GM12878 (cell line): ENCODE measurements at regions of chr11 and their contacts with region 1.

Region 1: DNA sequence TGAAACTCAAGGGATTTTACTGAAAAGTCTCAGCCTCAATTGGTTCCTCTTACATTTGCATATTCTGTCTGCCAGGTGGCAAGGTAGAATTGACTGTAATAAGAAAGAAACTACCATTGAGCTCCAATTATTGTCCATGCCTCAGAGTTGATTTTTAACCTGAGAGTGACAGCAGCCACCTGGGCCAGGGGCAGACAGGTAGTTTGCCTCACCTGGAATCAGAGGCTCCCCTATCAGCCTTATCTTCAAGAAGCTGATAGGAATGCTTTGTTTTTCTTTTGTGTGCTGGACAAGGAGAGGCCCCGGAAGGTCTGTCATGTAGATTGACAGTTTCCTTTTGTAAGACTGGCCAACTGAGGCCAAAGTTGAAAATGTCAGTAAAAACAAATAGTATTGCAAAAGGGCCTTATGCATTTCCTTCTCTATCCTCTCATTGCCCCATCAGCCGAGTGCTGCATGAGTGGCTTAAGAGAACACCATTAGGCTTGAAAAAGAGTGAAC is 34.1 kb downstream of the CD44 start:
- DNase-seq: peak; percentile 35
- ATAC-seq: peak; percentile 74
- H3K4me3 ChIP-seq: no peak overlapping the region
- H3K27ac ChIP-seq: peak overlapping the region; percentile 38
- H3K4me1 ChIP-seq: peaks cover 32% of the 10 kb centered on the region
- H3K27me3 ChIP-seq: no peaks in the 10 kb centered on the region
- CTCF ChIP-seq: no peak
- EP300 ChIP-seq: peak in 1 of 2 experiments; percentile 37; a peak in 1 of 4 replicates
- POLR2A ChIP-seq: no peak
- RAD21 ChIP-seq: no peak

Region 2: DNA sequence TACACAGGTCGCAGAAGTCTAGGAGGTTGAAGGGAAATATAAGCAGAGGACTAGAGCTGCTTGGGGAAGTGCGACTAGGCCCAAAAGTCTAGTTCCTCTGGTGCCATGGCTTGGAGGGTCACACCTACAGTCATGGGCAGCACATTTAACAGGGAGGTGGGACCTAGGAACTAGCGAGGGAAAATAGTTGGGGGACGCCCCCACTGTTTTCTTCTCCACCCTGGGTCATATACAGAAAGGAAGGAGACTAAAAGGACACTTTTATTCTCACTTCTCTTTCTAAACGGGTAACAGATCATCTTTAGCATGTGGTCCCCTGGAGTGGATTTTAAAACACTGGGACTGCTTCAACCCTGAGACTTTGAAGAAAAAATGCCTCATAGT is 273.4 kb before region 1 on chr11:
- CTCF ChIA-PET with region 1: no interaction called
- POLR2A ChIA-PET with region 1: no interaction called
- RAD21 ChIA-PET with region 1: no interaction called
- SMC1A ChIA-PET with region 1: no interaction called
- in situ Hi-C with region 1: no loop called
- intact Hi-C with region 1: no loop called
- DNase-seq: no peak
- ATAC-seq: no peak
- H3K4me3 ChIP-seq: no peak overlapping the region
- H3K27ac ChIP-seq: no peak overlapping the region
- H3K4me1 ChIP-seq: no peaks in the 10 kb centered on the region
- H3K27me3 ChIP-seq: no peaks in the 10 kb centered on the region
- CTCF ChIP-seq: no peak
- EP300 ChIP-seq: no peak
- POLR2A ChIP-seq: no peak
- RAD21 ChIP-seq: no peak

Region 3: DNA sequence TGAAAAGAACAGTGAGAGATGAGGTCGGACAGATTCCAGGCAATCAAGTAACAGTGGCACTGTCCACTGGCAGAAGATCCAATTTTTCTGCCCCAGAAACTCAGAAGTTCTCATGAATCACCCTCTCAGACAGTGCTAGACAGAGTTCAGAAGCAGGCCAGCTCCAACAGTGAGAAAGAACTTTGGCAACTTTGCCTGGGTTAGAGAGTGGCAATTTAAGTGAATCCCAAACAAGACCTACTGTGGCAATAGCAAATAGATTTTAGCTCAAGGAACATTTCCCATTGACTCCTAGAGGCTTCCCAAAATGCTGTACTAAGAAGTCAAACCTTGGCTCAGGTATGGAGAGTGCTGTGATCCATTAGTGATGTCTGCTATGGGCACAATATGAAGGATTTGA is 21.8 kb before region 1 on chr11:
- CTCF ChIA-PET with region 1: interaction called, 4 read pairs
- POLR2A ChIA-PET with region 1: no interaction called
- RAD21 ChIA-PET with region 1: interaction called, 11 read pairs
- SMC1A ChIA-PET with region 1: interaction called, 76 read pairs
- in situ Hi-C with region 1: no loop called
- intact Hi-C with region 1: no loop called
- DNase-seq: no peak
- ATAC-seq: no peak
- H3K4me3 ChIP-seq: no peak overlapping the region
- H3K27ac ChIP-seq: no peak overlapping the region
- H3K4me1 ChIP-seq: peaks cover 12% of the 10 kb centered on the region
- H3K27me3 ChIP-seq: no peaks in the 10 kb centered on the region
- CTCF ChIP-seq: no peak
- EP300 ChIP-seq: no peak
- POLR2A ChIP-seq: no peak
- RAD21 ChIP-seq: no peak